Activated naive CD4-positive, alpha-beta T cell treated with anti-CD3 and anti-CD28 coated beads for 36 hours (primary cell): ENCODE measurements at regions of chr6 and their contacts with region 1.

Region 1: GRCh38 chr6:133553652-133554051 is 312.5 kb downstream of the EYA4 start:
- DNase-seq: peak; percentile 47
- H3K4me3 Mint-ChIP-seq: no peak overlapping the region
- H3K27ac Mint-ChIP-seq: no peak overlapping the region
- H3K4me1 Mint-ChIP-seq: no peaks in the 10 kb centered on the region
- H3K27me3 Mint-ChIP-seq: peaks cover 4% of the 10 kb centered on the region

Region 2: GRCh38 chr6:132830334-132830751 is 723.3 kb before region 1 on chr6:
- CTCF ChIA-PET with region 1: interaction called, 4 read pairs
- intact Hi-C with region 1: loop called (anchors 1 kb)
- DNase-seq: no peak
- H3K4me3 Mint-ChIP-seq: no peak overlapping the region
- H3K27ac Mint-ChIP-seq: no peak overlapping the region
- H3K4me1 Mint-ChIP-seq: no peaks in the 10 kb centered on the region
- H3K27me3 Mint-ChIP-seq: no peaks in the 10 kb centered on the region

Region 3: DNA sequence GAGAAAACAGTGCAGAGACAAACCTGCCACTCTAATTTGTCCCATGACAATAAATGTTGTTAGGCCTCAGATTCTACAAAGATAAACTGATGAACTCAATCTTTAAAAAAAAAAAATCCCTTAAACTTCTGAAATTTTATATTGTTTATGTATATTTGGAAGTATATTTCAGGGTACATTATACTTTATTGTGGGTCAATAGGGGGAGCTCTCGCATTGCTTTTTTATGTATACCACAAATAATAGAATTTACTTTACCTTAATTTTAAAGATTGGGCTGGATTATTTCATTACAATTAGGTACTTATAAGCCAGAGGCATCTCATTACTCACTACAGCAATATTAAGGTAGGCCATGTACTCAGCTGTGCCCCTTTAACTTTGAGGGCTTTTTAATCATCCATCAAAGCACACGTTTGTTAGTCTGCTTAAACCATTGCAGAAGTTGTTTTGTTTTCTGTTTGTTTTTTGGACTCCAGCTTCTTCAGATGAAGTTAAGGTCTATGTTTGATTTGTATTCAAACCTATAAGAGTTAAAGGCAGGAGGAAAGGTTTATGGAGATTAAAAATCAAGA is 368.8 kb before region 1 on chr6:
- CTCF ChIA-PET with region 1: interaction called, 9 read pairs
- intact Hi-C with region 1: loop called (anchors 2 kb)
- DNase-seq: no peak
- H3K4me3 Mint-ChIP-seq: no peak overlapping the region
- H3K27ac Mint-ChIP-seq: no peak overlapping the region
- H3K4me1 Mint-ChIP-seq: no peaks in the 10 kb centered on the region
- H3K27me3 Mint-ChIP-seq: peaks cover 11% of the 10 kb centered on the region

Region 4: DNA sequence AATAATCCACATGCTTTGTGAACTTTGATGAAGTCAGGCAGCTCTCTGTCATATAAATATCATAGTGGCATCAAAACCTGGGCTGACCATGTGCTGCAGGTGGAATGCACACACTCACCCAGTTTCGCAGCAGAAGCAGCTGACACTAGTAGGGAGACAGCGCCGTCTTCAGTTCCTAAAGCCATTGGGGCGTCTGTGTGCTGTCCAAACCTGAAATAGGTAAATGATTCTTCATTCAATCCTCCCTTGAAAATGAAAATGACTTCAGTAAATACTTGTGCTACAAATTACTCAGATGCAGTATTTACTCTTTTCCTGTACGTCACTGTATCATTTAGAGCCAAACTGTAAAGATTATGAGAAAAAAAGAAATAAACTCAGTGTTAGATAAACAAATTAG is 185.0 kb before region 1 on chr6:
- CTCF ChIA-PET with region 1: no interaction called
- intact Hi-C with region 1: no loop called
- DNase-seq: no peak
- H3K4me3 Mint-ChIP-seq: no peak overlapping the region
- H3K27ac Mint-ChIP-seq: no peak overlapping the region
- H3K4me1 Mint-ChIP-seq: no peaks in the 10 kb centered on the region
- H3K27me3 Mint-ChIP-seq: no peaks in the 10 kb centered on the region

Region 5: GRCh38 chr6:133502441-133503259 is 51.0 kb before region 1 on chr6:
- CTCF ChIA-PET with region 1: no interaction called
- intact Hi-C with region 1: no loop called
- DNase-seq: no peak
- H3K4me3 Mint-ChIP-seq: no peak overlapping the region
- H3K27ac Mint-ChIP-seq: no peak overlapping the region
- H3K4me1 Mint-ChIP-seq: no peaks in the 10 kb centered on the region
- H3K27me3 Mint-ChIP-seq: peaks cover 7% of the 10 kb centered on the region

Region 6: GRCh38 chr6:133724726-133725125 is 171.1 kb after region 1 on chr6:
- CTCF ChIA-PET with region 1: no interaction called
- intact Hi-C with region 1: no loop called
- DNase-seq: no peak
- H3K4me3 Mint-ChIP-seq: no peak overlapping the region
- H3K27ac Mint-ChIP-seq: no peak overlapping the region
- H3K4me1 Mint-ChIP-seq: no peaks in the 10 kb centered on the region
- H3K27me3 Mint-ChIP-seq: no peaks in the 10 kb centered on the region